ENCODE measurements at regions of chr9 and their contacts with region 1.

Region 1: GRCh38 chr9:131370638-131371037 is 23.2 kb upstream of the PRRC2B start:
- DNase-seq: no peak
- ATAC-seq: no peak
- H3K4me3 ChIP-seq: no peak overlapping the region
- H3K27ac ChIP-seq: no peak overlapping the region
- H3K4me1 ChIP-seq: peaks cover 3% of the 10 kb centered on the region
- H3K27me3 ChIP-seq: no peaks in the 10 kb centered on the region
- CTCF ChIP-seq: no peak

Region 2: GRCh38 chr9:131358556-131358955 is 12.1 kb before region 1 on chr9:
- CTCF ChIA-PET with region 1: no interaction called
- POLR2A ChIA-PET with region 1: interaction called, 11 read pairs
- in situ Hi-C with region 1: no loop called
- intact Hi-C with region 1: no loop called
- DNase-seq: no peak
- ATAC-seq: no peak
- H3K4me3 ChIP-seq: no peak overlapping the region
- H3K27ac ChIP-seq: no peak overlapping the region
- H3K4me1 ChIP-seq: no peaks in the 10 kb centered on the region
- H3K27me3 ChIP-seq: no peaks in the 10 kb centered on the region
- CTCF ChIP-seq: no peak

Region 3: GRCh38 chr9:131402738-131403492 is 32.3 kb after region 1 on chr9:
- CTCF ChIA-PET with region 1: interaction called, 13 read pairs
- POLR2A ChIA-PET with region 1: no interaction called
- in situ Hi-C with region 1: no loop called
- intact Hi-C with region 1: no loop called
- DNase-seq: no peak
- ATAC-seq: peak; percentile 74
- H3K4me3 ChIP-seq: peak overlapping the region; percentile 11 to 41
- H3K27ac ChIP-seq: peak overlapping the region; percentile 79
- H3K4me1 ChIP-seq: peaks cover 74% of the 10 kb centered on the region
- H3K27me3 ChIP-seq: no peaks in the 10 kb centered on the region
- CTCF ChIP-seq: no peak

Region 4: DNA sequence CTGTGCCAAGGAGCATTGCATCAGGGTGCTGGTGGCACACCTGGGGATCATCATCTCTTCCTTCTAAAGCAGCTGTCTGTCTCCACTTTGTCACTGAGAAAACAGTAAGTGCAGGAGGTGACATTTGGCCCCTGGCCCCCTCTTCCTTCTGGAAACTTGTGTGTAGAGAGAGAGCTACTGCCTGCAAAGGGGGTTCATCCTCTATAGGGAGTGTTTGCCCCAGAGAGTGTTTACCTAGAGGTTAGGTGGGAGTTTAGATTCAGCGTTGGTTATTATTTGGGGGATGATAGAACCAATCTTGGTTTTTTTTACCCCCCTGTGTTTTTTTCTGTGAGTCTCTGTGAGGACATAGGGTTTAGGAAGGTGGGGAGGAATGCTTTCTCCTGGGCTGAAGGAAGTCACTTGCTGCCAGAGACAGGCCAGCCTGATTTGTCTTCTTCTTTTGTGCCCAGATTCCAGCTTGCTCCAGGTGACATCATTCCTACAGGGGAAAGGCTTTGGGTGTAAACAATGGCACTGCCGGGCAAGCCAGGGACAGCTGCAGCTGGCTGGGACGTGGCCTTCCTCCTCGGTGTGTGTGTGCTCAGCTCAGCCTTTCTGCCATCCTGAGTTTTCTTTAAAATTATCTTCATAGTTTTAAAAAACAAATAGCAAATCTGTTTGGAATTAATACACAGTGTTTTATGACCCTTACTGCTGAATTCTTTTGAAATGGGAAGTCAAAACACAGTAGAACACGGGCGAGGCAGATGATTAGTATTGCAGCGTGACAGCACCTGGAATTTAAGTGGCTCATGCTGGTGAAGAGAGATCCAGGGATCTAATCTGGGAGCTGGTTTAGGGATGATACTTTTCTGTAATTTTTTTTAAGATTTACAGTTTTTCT is 47.7 kb after region 1 on chr9:
- CTCF ChIA-PET with region 1: no interaction called
- POLR2A ChIA-PET with region 1: no interaction called
- in situ Hi-C with region 1: no loop called
- intact Hi-C with region 1: no loop called
- DNase-seq: no peak
- ATAC-seq: no peak
- H3K4me3 ChIP-seq: no peak overlapping the region
- H3K27ac ChIP-seq: peak overlapping the region; percentile 34; the same call in 1 of the 2 replicates
- H3K4me1 ChIP-seq: peaks cover 64% of the 10 kb centered on the region
- H3K27me3 ChIP-seq: no peaks in the 10 kb centered on the region
- CTCF ChIP-seq: no peak

Region 5: DNA sequence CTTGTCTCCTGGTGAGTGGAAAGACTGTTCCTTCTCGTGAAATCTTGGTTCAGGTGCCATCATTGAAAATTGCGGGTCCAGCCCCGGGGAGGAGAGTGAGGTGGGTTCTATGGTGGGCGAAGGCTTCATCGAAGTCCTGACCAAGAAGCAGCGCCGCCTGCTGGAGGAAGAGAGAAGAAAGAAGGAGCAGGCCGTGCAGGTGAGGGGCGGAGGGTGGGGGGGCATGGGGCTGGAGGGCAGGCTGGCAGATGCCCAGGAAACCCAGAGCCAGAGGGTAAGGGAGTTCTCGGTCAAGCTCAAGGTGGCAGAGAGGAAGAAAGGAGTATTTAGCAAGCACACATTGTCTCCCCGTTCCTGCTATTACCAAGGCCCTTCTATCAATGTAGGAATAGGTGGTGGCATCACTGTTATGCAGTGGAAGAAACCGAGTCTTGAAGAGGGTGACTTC is 107.8 kb after region 1 on chr9:
- CTCF ChIA-PET with region 1: no interaction called
- POLR2A ChIA-PET with region 1: interaction called, 11 read pairs
- in situ Hi-C with region 1: no loop called
- intact Hi-C with region 1: no loop called
- DNase-seq: no peak
- ATAC-seq: no peak
- H3K4me3 ChIP-seq: no peak overlapping the region
- H3K27ac ChIP-seq: no peak overlapping the region
- H3K4me1 ChIP-seq: no peaks in the 10 kb centered on the region
- H3K27me3 ChIP-seq: no peaks in the 10 kb centered on the region
- CTCF ChIP-seq: peak; percentile 83

Measured in Panc1 (cell line).